Activated CD4-positive, alpha-beta T cell treated with anti-CD3 and anti-CD28 coated beads, Interleukin-2, amount 10 ng/mL, durations not matched to agents 24 days and 14 days (primary cell): ENCODE measurements at regions of chr9 and their contacts with region 1.

Region 1: DNA sequence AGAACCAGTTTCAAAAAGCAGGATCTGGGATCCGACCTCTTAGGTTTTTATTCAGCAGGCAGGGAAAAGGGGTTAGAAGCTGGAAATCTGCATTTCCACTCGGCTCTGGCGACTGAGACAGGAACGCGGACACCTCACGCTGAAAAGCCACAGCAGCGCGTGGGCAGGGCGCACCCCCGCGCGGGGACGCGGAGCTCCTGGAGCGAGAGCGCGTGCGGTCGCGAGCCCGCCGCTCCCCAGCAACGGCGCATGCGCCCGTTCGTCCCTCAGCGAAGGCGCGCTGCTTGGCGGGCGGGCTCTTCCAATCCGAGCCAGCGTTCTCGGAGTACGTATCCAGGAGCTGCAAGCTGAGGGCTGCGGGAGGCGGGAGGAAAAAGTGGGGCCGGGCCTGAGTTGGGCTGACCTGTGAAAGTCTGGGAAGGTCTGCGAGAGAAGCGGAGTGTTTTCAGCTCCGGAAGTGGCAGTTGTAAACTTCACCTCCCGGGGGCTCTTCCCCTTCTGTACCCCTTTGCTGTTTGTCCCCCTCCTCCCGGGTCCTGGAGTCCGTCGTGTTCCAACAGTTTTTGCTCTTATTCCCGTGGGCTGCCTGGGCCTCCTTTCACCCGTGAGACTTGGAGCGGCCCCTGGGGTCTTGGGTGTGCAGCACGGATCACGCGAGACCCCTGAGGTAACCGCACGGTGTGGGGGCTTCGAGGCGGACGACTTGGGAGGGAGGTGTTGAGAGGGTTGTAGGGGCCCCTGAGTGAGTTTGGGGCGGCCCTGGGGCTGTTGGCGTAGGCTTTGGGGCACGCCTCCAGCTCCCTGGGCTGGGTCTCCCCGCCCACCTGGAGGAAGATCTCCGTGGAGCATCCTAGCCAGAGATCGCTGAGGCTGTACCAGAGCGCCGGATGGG is at the start of gene CCDC171:
- DNase-seq: peak; percentile 96
- H3K4me3 Mint-ChIP-seq: peak within 1 kb of the TSS; percentile 89
- H3K27ac Mint-ChIP-seq: peak within 1 kb of the TSS; percentile 81
- H3K4me1 Mint-ChIP-seq: peaks cover 13% of the 10 kb centered on the region
- H3K27me3 Mint-ChIP-seq: peaks cover 17% of the 10 kb centered on the region
- total RNA-seq, gene CCDC171: 1.5 and 1.6 TPM in 2 replicates

Region 2: DNA sequence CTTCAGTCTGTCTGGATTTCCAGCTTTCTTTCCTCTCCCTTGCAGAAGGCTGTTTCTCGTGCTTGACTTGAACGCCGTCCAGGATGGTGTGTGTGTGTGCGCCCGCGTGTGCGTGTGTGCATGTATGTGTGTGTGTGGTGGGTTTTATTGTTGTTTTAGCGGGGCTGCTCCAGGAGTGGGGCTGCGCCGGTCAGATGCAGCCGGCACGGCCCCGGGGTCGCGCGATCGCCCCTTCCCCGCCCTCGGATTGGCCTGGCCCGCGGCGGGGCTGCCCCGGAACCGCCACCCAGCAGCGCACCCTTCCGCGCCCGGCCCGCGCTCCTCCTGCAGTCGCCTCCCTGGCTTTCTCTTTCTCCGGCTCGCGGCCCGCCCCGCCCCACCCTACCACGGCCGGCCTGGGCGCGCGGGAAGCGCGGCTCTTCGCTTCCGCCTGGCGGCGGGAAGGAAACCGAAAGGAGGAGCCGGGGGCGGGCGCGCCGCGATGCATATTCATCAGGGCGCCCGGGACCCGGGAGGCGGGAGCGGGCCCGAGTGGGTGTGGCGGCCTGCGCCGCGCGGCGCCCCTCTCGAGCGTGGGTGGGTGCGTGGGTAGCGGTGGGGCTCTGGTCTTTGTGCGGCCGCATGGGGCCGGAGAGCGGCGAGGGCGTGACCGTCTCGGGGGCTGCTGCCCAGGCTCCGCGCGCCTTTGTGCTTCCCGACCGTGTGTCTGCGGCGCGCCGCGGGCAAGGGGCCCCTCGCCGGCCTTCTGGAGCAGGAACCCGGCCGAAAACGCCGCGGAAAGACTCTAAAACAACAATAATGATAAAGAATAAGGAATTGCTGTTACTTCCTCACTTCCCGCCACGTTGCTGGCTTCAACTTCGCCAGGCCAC is 1230.4 kb before region 1 on chr9:
- intact Hi-C with region 1: loop called (anchors 2 kb)
- DNase-seq: peak; percentile 96
- H3K4me3 Mint-ChIP-seq: peak overlapping the region; percentile 86
- H3K27ac Mint-ChIP-seq: peak overlapping the region; percentile 76
- H3K4me1 Mint-ChIP-seq: peaks cover 21% of the 10 kb centered on the region
- H3K27me3 Mint-ChIP-seq: peaks cover 70% of the 10 kb centered on the region

Region 3: GRCh38 chr9:15142878-15143534 is 409.9 kb before region 1 on chr9:
- intact Hi-C with region 1: no loop called
- DNase-seq: peak; percentile 72
- H3K4me3 Mint-ChIP-seq: no peak overlapping the region
- H3K27ac Mint-ChIP-seq: no peak overlapping the region
- H3K4me1 Mint-ChIP-seq: peaks cover 3% of the 10 kb centered on the region
- H3K27me3 Mint-ChIP-seq: peaks cover 9% of the 10 kb centered on the region

Region 4: DNA sequence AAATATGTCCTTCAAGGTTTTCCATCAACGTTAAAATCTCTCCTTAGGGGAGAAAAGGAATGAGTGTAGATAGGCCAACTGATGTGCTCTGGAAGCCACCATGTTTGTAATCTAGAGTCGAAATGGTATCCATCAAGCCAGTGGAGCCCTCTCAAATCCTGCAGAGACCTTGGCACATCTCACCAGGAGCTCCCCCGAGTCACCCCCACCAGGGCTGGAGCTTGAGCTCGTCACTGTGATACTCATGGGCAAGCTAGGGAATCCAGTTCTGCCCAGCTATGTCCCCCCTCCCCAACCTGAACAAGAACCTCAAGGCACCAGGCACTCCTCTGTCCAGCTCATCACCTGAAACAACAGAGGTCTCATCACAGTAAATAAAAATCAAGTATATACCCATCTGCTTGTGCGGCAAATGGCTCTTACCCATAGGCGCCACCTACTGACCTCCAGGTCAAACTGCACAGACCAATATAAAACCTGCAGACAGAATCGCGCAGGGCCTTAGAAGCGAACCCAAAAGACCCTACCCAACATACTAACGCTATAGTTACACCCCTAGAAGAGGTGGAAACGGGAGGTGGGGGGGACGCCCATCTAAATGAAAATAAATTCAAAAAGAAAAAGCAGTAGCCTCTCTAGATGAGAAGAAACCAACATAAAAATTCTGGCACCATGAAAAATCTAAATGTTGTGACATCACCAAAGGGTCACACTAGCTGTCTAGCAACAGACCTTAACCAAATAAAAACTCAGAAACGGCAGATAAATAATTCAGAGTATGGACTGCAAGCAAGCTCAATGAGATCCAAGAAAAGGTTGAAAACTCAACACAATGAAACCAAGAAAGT is 320.9 kb before region 1 on chr9:
- intact Hi-C with region 1: loop called (anchors 2 kb)
- DNase-seq: no peak
- H3K4me3 Mint-ChIP-seq: no peak overlapping the region
- H3K27ac Mint-ChIP-seq: no peak overlapping the region
- H3K4me1 Mint-ChIP-seq: peaks cover 27% of the 10 kb centered on the region
- H3K27me3 Mint-ChIP-seq: no peaks in the 10 kb centered on the region

Region 5: GRCh38 chr9:15306757-15307534 is 245.9 kb before region 1 on chr9 and contains the start of gene TTC39B:
- intact Hi-C with region 1: loop called (anchors 5 kb)
- DNase-seq: peak; percentile 96
- H3K4me3 Mint-ChIP-seq: peak within 1 kb of the TSS; percentile 99
- H3K27ac Mint-ChIP-seq: peak within 1 kb of the TSS; percentile 97
- H3K4me1 Mint-ChIP-seq: peaks cover 51% of the 10 kb centered on the region
- H3K27me3 Mint-ChIP-seq: no peaks in the 10 kb centered on the region
- total RNA-seq, gene TTC39B: 20.3 and 22.2 TPM in 2 replicates

Region 6: DNA sequence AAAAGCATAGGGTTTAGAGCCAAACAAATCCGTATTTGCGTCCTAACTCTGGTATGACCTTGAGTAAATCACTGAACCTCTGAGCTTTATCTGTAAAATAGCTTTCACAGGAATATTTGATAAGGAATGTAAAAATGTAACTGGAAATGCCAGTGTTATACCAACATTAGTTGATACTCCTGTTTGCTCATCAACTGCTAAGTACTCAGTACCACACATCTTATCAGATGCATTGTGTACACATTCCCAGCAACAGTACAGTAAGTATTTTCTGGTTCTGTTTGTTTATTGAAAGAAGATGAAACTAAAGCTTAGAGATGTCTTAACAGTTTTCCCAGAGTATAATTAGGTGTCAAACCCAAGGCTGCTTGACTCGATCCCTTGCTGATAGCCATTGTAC is 108.7 kb before region 1 on chr9:
- intact Hi-C with region 1: no loop called
- DNase-seq: no peak
- H3K4me3 Mint-ChIP-seq: no peak overlapping the region
- H3K27ac Mint-ChIP-seq: no peak overlapping the region
- H3K4me1 Mint-ChIP-seq: peaks cover 7% of the 10 kb centered on the region
- H3K27me3 Mint-ChIP-seq: no peaks in the 10 kb centered on the region

Region 7: GRCh38 chr9:15510789-15511575 is 41.9 kb before region 1 on chr9 and contains the start of gene PSIP1:
- intact Hi-C with region 1: loop called (anchors 1 kb)
- DNase-seq: peak; percentile 96
- H3K4me3 Mint-ChIP-seq: peak within 1 kb of the TSS; percentile 87
- H3K27ac Mint-ChIP-seq: peak within 1 kb of the TSS; percentile 100
- H3K4me1 Mint-ChIP-seq: peaks cover 41% of the 10 kb centered on the region
- H3K27me3 Mint-ChIP-seq: peaks cover 3% of the 10 kb centered on the region
- total RNA-seq, gene PSIP1: 106 TPM in 2 replicates

Region 8: DNA sequence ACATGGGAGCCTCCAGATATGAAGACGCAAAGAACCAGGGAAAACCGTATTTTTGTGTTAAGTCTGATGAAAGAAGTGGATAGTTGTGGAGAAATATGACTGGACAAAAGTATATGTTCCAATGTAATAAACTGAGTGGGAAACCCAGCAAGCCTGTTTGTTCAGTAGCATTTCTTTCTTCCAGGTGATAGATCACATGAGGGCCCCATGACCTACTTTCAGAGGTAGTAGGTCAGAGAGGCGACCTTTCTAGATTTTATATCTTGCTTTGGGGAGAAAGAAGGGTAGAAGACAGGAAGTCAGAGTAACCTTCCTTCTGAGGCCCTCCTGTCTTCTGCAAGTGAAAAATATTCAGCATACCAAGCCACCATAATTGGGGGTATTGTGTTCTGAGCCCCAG is 31.5 kb after region 1 on chr9:
- intact Hi-C with region 1: no loop called
- DNase-seq: no peak
- H3K4me3 Mint-ChIP-seq: no peak overlapping the region
- H3K27ac Mint-ChIP-seq: no peak overlapping the region
- H3K4me1 Mint-ChIP-seq: no peaks in the 10 kb centered on the region
- H3K27me3 Mint-ChIP-seq: no peaks in the 10 kb centered on the region

Region 9: GRCh38 chr9:15606643-15607472 is 54.0 kb after region 1 on chr9:
- intact Hi-C with region 1: loop called (anchors 1 kb)
- DNase-seq: peak; percentile 78
- H3K4me3 Mint-ChIP-seq: no peak overlapping the region
- H3K27ac Mint-ChIP-seq: no peak overlapping the region
- H3K4me1 Mint-ChIP-seq: peaks cover 5% of the 10 kb centered on the region
- H3K27me3 Mint-ChIP-seq: no peaks in the 10 kb centered on the region